ENCODE measurements at regions of chr5 and their contacts with region 1.

Region 1: DNA sequence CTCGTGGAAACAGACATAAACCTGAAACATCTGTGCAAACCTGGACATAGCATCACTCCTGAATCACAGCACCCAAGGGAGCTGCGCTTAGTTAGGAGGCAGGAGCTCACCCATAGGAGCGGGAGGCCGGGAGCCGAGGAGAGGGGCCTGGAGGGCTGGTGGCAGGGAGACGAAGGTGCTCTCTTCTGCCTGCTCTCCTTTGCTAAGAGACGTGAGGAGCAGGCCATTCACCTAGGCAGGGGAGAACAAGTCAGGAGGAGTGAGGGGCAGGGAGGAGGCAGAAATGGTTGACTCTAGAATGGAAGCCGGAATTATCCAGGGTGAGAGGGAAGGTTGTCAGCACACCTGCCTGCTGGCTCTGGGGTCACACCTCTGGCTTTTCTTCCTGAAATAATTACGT is 398.4 kb upstream of the IRX2 start:
- DNase-seq: no peak
- ATAC-seq: no peak
- H3K4me3 ChIP-seq: no peak overlapping the region
- H3K27ac ChIP-seq: no peak overlapping the region
- H3K4me1 ChIP-seq: no peaks in the 10 kb centered on the region
- H3K27me3 ChIP-seq: peaks cover 0 to 24% (median 0%) of the 10 kb centered on the region in 7 donors
- CTCF ChIP-seq: no peak

Region 2: GRCh38 chr5:2813673-2814072 is 336.2 kb before region 1 on chr5:
- intact Hi-C with region 1: loop called in 1 of 10 experiments (anchors 5 kb)
- DNase-seq: no peak
- ATAC-seq: no peak
- H3K4me3 ChIP-seq: no peak overlapping the region
- H3K27ac ChIP-seq: no peak overlapping the region
- H3K4me1 ChIP-seq: no peaks in the 10 kb centered on the region
- H3K27me3 ChIP-seq: peaks cover 0 to 18% (median 5%) of the 10 kb centered on the region in 7 donors
- CTCF ChIP-seq: no peak

Region 3: GRCh38 chr5:3080366-3080765 is 69.5 kb before region 1 on chr5:
- intact Hi-C with region 1: no loop called
- DNase-seq: no peak
- ATAC-seq: no peak
- H3K4me3 ChIP-seq: no peak overlapping the region
- H3K27ac ChIP-seq: no peak overlapping the region
- H3K4me1 ChIP-seq: no peaks in the 10 kb centered on the region
- H3K27me3 ChIP-seq: peaks cover 0 to 9% (median 0%) of the 10 kb centered on the region in 7 donors
- CTCF ChIP-seq: no peak

Region 4: GRCh38 chr5:3446410-3446997 is 296.6 kb after region 1 on chr5:
- intact Hi-C with region 1: no loop called
- DNase-seq: no peak
- ATAC-seq: no peak
- H3K4me3 ChIP-seq: no peak overlapping the region
- H3K27ac ChIP-seq: no peak overlapping the region
- H3K4me1 ChIP-seq: no peaks in the 10 kb centered on the region
- H3K27me3 ChIP-seq: no peaks in the 10 kb centered on the region
- CTCF ChIP-seq: no peak